ENCODE measurements at regions of chr17 and their contacts with region 1.

Region 1: DNA sequence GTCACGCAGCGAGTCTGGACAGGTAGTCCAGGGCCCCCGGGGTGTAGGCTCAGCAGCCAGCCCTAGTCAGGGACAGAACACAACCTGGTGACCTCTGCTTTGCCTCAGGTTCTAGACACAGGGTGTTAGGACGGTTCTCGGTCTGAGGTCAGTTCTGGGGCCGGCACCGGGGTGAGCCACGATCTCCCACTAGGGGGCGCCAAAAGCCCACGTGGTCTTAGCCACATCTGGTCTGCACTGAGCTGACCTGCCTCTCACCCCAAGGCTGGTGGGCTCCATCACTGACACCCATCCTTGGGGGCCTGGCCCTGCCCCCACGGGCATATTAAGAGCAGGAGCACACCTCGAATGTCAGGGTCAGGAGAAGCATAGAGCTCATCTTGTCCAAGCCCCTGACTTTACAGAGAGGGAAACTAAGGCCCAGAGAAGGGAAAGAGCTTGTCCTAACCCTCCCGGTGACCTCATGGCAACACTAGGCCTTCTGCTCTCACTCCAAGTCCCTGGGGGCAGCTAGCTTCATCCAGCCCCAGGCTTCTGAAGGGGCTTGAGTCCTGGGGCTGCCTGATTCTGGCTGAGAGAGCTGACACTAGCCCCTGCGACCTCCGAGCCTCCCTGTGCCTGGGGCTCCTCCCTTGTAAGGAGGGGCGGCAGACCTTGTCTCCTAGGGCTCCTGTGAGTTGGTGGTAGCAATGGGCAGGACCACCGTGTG is 9.0 kb downstream of the SLC5A10 start:
- DNase-seq: peak; percentile 35
- H3K4me3 ChIP-seq: no peak overlapping the region
- H3K27ac ChIP-seq: no peak overlapping the region
- H3K4me1 ChIP-seq: peaks cover 8% of the 10 kb centered on the region
- H3K27me3 ChIP-seq: no peaks in the 10 kb centered on the region
- CTCF ChIP-seq: peak; percentile 85 to 91

Region 2: GRCh38 chr17:18859256-18859655 is 101.7 kb before region 1 on chr17:
- CTCF ChIA-PET with region 1: interaction called, 16 read pairs
- dilution Hi-C with region 1: no loop called
- in situ Hi-C with region 1: no loop called
- intact Hi-C with region 1: no loop called
- DNase-seq: no peak
- H3K4me3 ChIP-seq: peak overlapping the region; percentile 63 to 76 (median 72)
- H3K27ac ChIP-seq: no peak overlapping the region
- H3K4me1 ChIP-seq: peaks cover 31% of the 10 kb centered on the region
- H3K27me3 ChIP-seq: no peaks in the 10 kb centered on the region
- CTCF ChIP-seq: no peak

Region 3: DNA sequence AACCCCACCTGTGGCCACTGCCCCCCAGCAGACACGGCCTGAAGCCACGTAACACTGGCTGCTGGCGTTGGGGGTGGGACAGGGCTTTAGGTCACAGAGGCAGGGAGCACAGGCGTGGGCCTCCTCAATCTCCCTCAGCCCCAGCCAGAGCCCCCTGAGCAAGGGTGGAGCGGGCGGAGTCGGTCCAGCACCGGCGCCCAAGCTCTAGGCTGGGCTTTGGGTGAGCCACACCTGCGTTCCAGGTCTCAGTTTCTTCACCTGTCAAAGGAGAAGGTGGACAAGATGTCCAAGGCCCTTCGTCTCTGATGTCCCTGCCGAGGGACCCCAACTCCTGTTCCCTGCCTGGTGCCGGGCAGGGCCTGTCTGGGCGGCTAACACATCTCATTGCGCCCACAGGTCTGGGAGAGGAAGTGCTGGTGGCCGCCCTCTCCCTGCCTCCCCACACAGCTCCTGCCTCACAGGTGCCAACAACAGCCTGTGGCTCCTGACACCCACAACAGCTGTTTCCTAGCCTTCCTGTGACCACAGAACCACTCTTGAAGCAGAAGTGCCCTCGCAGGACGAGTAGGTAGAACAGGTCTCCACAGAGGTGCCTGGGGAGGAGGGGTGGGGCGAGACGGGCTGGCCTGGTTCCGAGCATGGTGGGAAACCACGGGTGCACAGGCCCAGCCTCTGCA is 31.6 kb after region 1 on chr17:
- CTCF ChIA-PET with region 1: no interaction called
- dilution Hi-C with region 1: no loop called
- in situ Hi-C with region 1: no loop called
- intact Hi-C with region 1: no loop called
- DNase-seq: no peak
- H3K4me3 ChIP-seq: no peak overlapping the region
- H3K27ac ChIP-seq: no peak overlapping the region
- H3K4me1 ChIP-seq: peaks cover 13% of the 10 kb centered on the region
- H3K27me3 ChIP-seq: no peaks in the 10 kb centered on the region
- CTCF ChIP-seq: no peak

Region 4: GRCh38 chr17:19019036-19019941 is 58.3 kb after region 1 on chr17:
- CTCF ChIA-PET with region 1: no interaction called
- dilution Hi-C with region 1: no loop called
- in situ Hi-C with region 1: no loop called
- intact Hi-C with region 1: loop called (anchors 10 kb)
- DNase-seq: no peak
- H3K4me3 ChIP-seq: no peak overlapping the region
- H3K27ac ChIP-seq: no peak overlapping the region
- H3K4me1 ChIP-seq: peaks cover 9% of the 10 kb centered on the region
- H3K27me3 ChIP-seq: no peaks in the 10 kb centered on the region
- CTCF ChIP-seq: no peak

Measured in mammary epithelial cell (primary cell).